HepG2 (cell line): ENCODE measurements at regions of chr20 and their contacts with region 1.

Region 1: GRCh38 chr20:62409931-62410745 is 3.1 kb upstream of the CABLES2 start:
- DNase-seq: peak; percentile 42
- ATAC-seq: peak; percentile 14; the same call in 2 of the 3 replicates
- H3K4me3 ChIP-seq: peak overlapping the region in 1 of 3 experiments; percentile 70; a peak in 1 of 6 replicates
- H3K27ac ChIP-seq: no peak overlapping the region
- H3K4me1 ChIP-seq: peaks cover 79% of the 10 kb centered on the region
- H3K27me3 ChIP-seq: peaks cover 12 to 32% of the 10 kb centered on the region in 2 experiments
- CTCF ChIP-seq: peak; percentile 96
- EP300 ChIP-seq: no peak
- POLR2A ChIP-seq: no peak
- RAD21 ChIP-seq: peak; percentile 61

Region 2: GRCh38 chr20:62368976-62369814 is 40.9 kb before region 1 on chr20:
- CTCF ChIA-PET with region 1: no interaction called
- POLR2A ChIA-PET with region 1: interaction called, 26 read pairs
- in situ Hi-C with region 1: no loop called
- intact Hi-C with region 1: no loop called
- DNase-seq: peak; percentile 66
- ATAC-seq: peak; percentile 30
- H3K4me3 ChIP-seq: peak overlapping the region; percentile 65 to 95 (median 91)
- H3K27ac ChIP-seq: peak overlapping the region; percentile 95
- H3K4me1 ChIP-seq: peaks cover 75% of the 10 kb centered on the region
- H3K27me3 ChIP-seq: no peaks in the 10 kb centered on the region
- CTCF ChIP-seq: peak; percentile 65
- EP300 ChIP-seq: no peak; a peak in 1 of 4 replicates
- POLR2A ChIP-seq: 0 out of 4 replicates have a peak, but pooled peaks of 1 of the 2 experiments have one; percentile 6
- RAD21 ChIP-seq: peak; percentile 5; the same call in 1 of the 2 replicates

Region 3: GRCh38 chr20:62485062-62485700 is 75.0 kb after region 1 on chr20:
- CTCF ChIA-PET with region 1: no interaction called
- POLR2A ChIA-PET with region 1: no interaction called
- in situ Hi-C with region 1: loop called (anchors 5 kb)
- intact Hi-C with region 1: loop called (anchors 5 kb)
- DNase-seq: no peak
- ATAC-seq: peak; percentile 45
- H3K4me3 ChIP-seq: peak overlapping the region in 1 of 3 experiments; percentile 28; a peak in 1 of 6 replicates
- H3K27ac ChIP-seq: no peak overlapping the region
- H3K4me1 ChIP-seq: peaks cover 58% of the 10 kb centered on the region
- H3K27me3 ChIP-seq: peaks cover 44 to 97% of the 10 kb centered on the region in 2 experiments
- CTCF ChIP-seq: no peak
- EP300 ChIP-seq: no peak
- POLR2A ChIP-seq: no peak
- RAD21 ChIP-seq: no peak

Region 4: GRCh38 chr20:62616728-62617621 is 206.8 kb after region 1 on chr20:
- CTCF ChIA-PET with region 1: no interaction called
- POLR2A ChIA-PET with region 1: no interaction called
- in situ Hi-C with region 1: no loop called
- intact Hi-C with region 1: loop called (anchors 5 kb)
- DNase-seq: peak; percentile 71
- ATAC-seq: peak; percentile 97
- H3K4me3 ChIP-seq: peak overlapping the region in 1 of 3 experiments; percentile 57; a peak in 1 of 6 replicates
- H3K27ac ChIP-seq: no peak overlapping the region
- H3K4me1 ChIP-seq: peaks cover 38% of the 10 kb centered on the region
- H3K27me3 ChIP-seq: peaks cover 5 to 52% of the 10 kb centered on the region in 2 experiments; a peak in 4 of 5 replicates
- CTCF ChIP-seq: peak; percentile 100
- EP300 ChIP-seq: no peak; a peak in 1 of 4 replicates
- POLR2A ChIP-seq: no peak
- RAD21 ChIP-seq: peak; percentile 99